Panc1 (cell line): ENCODE measurements at regions of chr11 and their contacts with region 1.

Region 1: GRCh38 chr11:70519117-70519516 is 120.8 kb downstream of the CTTN start:
- DNase-seq: no peak
- ATAC-seq: no peak
- H3K4me3 ChIP-seq: no peak overlapping the region
- H3K27ac ChIP-seq: no peak overlapping the region
- H3K4me1 ChIP-seq: no peaks in the 10 kb centered on the region
- H3K27me3 ChIP-seq: peaks cover 2% of the 10 kb centered on the region; the same call in 1 of the 2 replicates
- CTCF ChIP-seq: no peak

Region 2: DNA sequence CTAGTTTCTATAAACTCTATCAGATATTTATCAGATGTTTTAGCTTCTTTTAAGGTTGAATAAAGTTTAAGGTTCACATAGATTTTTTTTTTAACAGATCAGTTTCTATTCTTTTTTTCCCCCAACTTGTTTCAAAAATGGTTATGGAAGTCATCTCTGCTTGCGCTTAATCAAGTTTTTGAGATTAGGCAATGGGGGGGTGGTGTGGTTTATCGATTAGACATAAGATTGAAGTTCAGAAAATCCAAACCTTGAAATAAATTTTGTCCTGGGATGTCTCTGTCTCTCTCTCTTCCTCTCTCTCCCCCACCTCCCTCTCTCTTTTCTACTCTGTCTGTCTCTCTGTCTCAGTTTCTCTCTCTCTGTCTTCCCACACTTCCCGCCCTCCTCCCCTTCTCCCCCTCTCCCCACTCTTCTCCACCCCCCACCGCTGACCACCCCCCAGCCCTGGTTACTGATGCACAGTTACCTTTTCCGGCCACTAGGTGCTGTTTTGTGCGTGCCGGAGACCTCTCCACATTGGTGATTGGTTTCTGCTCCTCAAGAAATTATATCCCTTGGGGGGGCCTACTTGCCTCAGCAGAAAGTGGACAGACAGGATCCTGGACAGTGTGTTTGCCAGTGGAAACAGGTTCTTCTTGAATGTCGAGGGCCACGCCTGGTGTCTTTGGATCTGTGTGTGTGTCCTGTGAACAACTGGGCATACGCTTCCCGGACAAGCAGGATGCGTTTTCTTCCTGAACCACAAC is 470.7 kb before region 1 on chr11:
- CTCF ChIA-PET with region 1: no interaction called
- POLR2A ChIA-PET with region 1: interaction called, 10 read pairs
- in situ Hi-C with region 1: no loop called
- intact Hi-C with region 1: no loop called
- DNase-seq: no peak
- ATAC-seq: peak; percentile 85
- H3K4me3 ChIP-seq: no peak overlapping the region
- H3K27ac ChIP-seq: no peak overlapping the region
- H3K4me1 ChIP-seq: no peaks in the 10 kb centered on the region
- H3K27me3 ChIP-seq: peaks cover 36% of the 10 kb centered on the region
- CTCF ChIP-seq: peak; percentile 78

Region 3: DNA sequence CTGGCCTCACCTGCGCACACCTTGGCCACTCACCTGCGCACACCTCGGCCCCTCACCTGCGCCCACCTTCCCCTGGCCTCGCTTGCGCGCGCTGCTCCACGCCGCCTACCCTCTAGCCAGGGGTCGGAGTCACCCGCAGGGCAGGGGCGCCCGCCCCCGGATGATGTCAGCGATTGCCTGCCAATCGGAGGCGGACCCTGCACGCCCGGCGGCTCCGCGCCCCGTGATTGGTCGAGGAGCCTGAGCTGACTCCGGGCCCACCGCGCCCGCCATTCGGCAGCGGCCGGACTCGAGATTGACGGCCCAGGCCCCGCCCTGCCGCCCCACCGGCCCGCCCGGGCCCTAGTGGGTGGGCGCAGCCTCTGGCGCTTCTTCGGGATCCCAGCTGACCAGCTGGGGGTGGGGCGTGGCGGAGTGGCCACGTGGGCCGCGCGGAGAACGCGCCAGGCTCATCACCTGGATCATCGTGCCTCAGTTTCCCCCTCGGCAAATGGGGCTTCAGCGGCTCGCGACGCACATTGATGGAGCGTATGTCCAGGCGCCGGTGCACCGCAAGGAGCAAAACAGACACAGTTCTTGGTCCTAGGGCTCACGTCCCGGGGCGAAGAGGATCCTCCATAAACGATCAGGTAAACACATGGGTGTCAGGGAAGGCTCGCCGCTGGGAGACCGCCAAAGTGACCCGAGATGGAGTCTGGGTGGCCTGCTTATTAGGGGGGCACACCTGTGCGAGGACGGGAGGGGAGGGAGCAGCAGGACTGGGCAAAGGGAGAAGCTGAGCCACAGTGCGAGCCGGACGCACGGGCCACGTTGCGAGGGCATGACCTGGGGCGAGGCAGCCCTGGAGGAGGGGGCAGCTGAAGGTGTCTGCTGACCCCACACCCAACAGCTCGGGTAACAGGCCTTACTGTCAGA is 929.4 kb after region 1 on chr11 and contains the start of gene DHCR7:
- CTCF ChIA-PET with region 1: no interaction called
- POLR2A ChIA-PET with region 1: interaction called, 13 read pairs
- in situ Hi-C with region 1: no loop called
- intact Hi-C with region 1: no loop called
- DNase-seq: peak; percentile 36
- ATAC-seq: peak; percentile 93
- H3K4me3 ChIP-seq: peak within 1 kb of the TSS; percentile 85 to 87
- H3K27ac ChIP-seq: peak within 1 kb of the TSS; percentile 87
- H3K4me1 ChIP-seq: peaks cover 28% of the 10 kb centered on the region
- H3K27me3 ChIP-seq: no peaks in the 10 kb centered on the region
- CTCF ChIP-seq: no peak
- total RNA-seq, gene DHCR7: 356 TPM